Psoas muscle (tissue), 8 donors: ENCODE measurements at regions of chr15 and their contacts with region 1.

Region 1: GRCh38 chr15:34223904-34224596 is 766 bp upstream of the EMC4 start:
- DNase-seq: no peak
- ATAC-seq: peak; percentile 13 to 50 (median 29)
- H3K4me3 ChIP-seq: peak overlapping the region; percentile 96
- H3K27ac ChIP-seq: peak overlapping the region; percentile 94
- H3K4me1 ChIP-seq: peaks cover 13% of the 10 kb centered on the region
- H3K27me3 ChIP-seq: no peaks in the 10 kb centered on the region
- CTCF ChIP-seq: no peak

Region 2: DNA sequence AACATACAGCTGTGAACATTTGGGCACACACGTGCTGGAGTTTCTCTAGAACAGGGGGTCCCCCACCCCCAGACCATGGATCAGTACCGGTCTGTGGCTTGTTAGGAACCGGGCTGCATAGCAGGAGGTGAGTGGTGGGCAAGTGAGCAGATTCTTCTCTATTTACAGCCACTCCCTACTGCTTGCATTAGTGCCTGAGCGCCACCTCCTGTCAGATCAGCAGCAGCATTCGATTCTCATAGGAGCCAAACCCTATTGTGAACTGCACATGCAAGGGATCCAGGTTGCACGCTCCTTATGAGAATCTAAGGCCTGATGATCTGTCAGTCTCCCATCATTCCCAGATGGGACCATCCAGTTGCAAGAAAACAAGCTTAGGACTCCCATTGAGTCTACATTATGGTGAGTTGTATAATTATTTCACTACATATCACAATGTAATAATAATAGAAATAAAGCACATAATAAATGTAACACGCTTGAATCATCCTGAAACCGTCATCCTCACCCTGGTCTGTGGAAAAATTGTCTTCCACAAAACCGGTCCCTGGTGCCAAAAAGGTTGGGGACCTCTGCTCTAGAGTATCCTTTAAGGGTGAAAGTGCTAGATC is 229.9 kb before region 1 on chr15:
- intact Hi-C with region 1: no loop called
- DNase-seq: no peak
- ATAC-seq: no peak
- H3K4me3 ChIP-seq: no peak overlapping the region
- H3K27ac ChIP-seq: no peak overlapping the region
- H3K4me1 ChIP-seq: no peaks in the 10 kb centered on the region
- H3K27me3 ChIP-seq: no peaks in the 10 kb centered on the region
- CTCF ChIP-seq: no peak

Region 3: DNA sequence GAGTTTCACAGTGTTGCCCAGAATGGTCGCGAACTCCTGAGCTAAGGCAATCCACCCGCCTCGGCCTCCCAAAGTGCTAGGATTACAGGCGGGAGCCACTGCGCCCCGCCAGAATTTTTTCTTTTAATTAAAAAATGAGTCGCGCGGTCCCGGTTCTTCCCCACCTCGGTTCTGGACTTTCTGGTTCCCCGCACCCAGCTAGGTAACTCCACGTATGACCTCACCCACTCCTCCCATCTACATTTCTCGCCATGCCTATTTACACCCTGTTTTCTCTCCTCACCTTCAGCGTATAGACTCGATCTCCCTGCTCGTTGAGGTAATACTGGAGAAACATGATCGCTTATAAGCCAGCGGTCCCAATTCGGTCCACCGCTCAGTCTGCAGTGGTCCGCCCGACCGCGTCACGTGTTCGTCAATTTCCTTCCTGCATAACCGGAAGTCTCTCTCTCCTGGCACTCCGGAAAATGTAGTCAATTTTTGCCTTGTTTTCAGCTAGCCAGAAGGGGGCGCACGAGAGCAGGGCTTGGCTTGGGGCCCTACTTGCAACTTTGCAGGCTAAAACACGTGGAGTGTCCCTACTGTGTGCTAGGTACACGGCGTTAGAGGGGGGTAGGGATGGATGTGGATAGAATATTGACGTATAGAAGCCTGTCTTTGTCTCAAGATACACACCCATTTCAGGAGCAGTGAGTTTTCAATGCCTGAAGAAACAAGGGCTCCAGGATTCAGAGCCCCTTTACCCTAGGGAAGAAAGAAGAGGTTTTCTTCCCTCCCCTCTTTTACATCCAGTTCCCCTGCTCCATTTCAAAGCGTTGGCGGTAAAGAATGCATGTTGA is 118.9 kb after region 1 on chr15 and contains the starts of genes NOP10 and NUTM1:
- intact Hi-C with region 1: loop called in 1 of 2 experiments (anchors 5 kb)
- DNase-seq: peak; percentile 90 to 95
- ATAC-seq: peak; percentile 94 to 97 (median 96)
- H3K4me3 ChIP-seq: peak within 1 kb of the TSS; percentile 84
- H3K27ac ChIP-seq: peak within 1 kb of the TSS; percentile 77
- H3K4me1 ChIP-seq: peaks cover 10% of the 10 kb centered on the region
- H3K27me3 ChIP-seq: no peaks in the 10 kb centered on the region
- CTCF ChIP-seq: peak; percentile 93
- total RNA-seq, gene NOP10: 123 to 146 (median 134) TPM
- total RNA-seq, gene NUTM1: not detected